HEK293 (cell line): ENCODE measurements at regions of chr2 and their contacts with region 1.

Region 1: GRCh38 chr2:84881581-84882414 is 914 bp upstream of the TRABD2A start:
- H3K4me3 ChIP-seq: peak overlapping the region; percentile 50
- H3K27ac ChIP-seq: no peak overlapping the region
- H3K4me1 ChIP-seq: no peaks in the 10 kb centered on the region
- CTCF ChIP-seq: peak; percentile 83

Region 2: GRCh38 chr2:84894131-84894586 is 12.4 kb after region 1 on chr2:
- CTCF ChIA-PET with region 1: interaction called, 11 read pairs
- POLR2A ChIA-PET with region 1: interaction called, 3 read pairs
- H3K4me3 ChIP-seq: no peak overlapping the region
- H3K27ac ChIP-seq: no peak overlapping the region
- H3K4me1 ChIP-seq: no peaks in the 10 kb centered on the region
- CTCF ChIP-seq: no peak

Region 3: GRCh38 chr2:84905181-84906107 is 23.6 kb after region 1 on chr2 and contains the start of gene TMSB10:
- CTCF ChIA-PET with region 1: interaction called, 5 read pairs
- POLR2A ChIA-PET with region 1: interaction called, 21 read pairs
- H3K4me3 ChIP-seq: peak within 1 kb of the TSS; percentile 88
- H3K27ac ChIP-seq: peak within 1 kb of the TSS; percentile 81
- H3K4me1 ChIP-seq: peaks cover 5% of the 10 kb centered on the region
- CTCF ChIP-seq: no peak; the same call in 1 of the 2 replicates